Activated B cell treated with CpG ODN at 0.5 μM for 24 hours (primary cell): ENCODE measurements at regions of chr5 and their contacts with region 1.

Region 1: GRCh38 chr5:159100025-159100781 is 487 bp upstream of the EBF1 start:
- DNase-seq: peak; percentile 92
- ATAC-seq: peak; percentile 64
- H3K4me3 Mint-ChIP-seq: peak overlapping the region; percentile 99
- H3K27ac Mint-ChIP-seq: peak overlapping the region; percentile 95
- H3K4me1 Mint-ChIP-seq: peaks cover 69% of the 10 kb centered on the region
- H3K27me3 Mint-ChIP-seq: no peaks in the 10 kb centered on the region
- CTCF ChIP-seq: no peak

Region 2: GRCh38 chr5:158751961-158752655 is 348.1 kb before region 1 on chr5:
- CTCF ChIA-PET with region 1: no interaction called
- POLR2A ChIA-PET with region 1: interaction called, 12 read pairs
- intact Hi-C with region 1: loop called (anchors 2 kb)
- DNase-seq: no peak
- ATAC-seq: peak; percentile 83
- H3K4me3 Mint-ChIP-seq: peak overlapping the region; percentile 71
- H3K27ac Mint-ChIP-seq: peak overlapping the region; percentile 84
- H3K4me1 Mint-ChIP-seq: peaks cover 92% of the 10 kb centered on the region
- H3K27me3 Mint-ChIP-seq: no peaks in the 10 kb centered on the region
- CTCF ChIP-seq: no peak

Region 3: GRCh38 chr5:158875272-158875679 is 224.9 kb before region 1 on chr5:
- CTCF ChIA-PET with region 1: interaction called, 19 read pairs
- POLR2A ChIA-PET with region 1: interaction called, 63 read pairs
- intact Hi-C with region 1: loop called (anchors 1 kb)
- DNase-seq: no peak
- ATAC-seq: peak; percentile 36
- H3K4me3 Mint-ChIP-seq: peak overlapping the region; percentile 72
- H3K27ac Mint-ChIP-seq: peak overlapping the region; percentile 93
- H3K4me1 Mint-ChIP-seq: peaks cover 93% of the 10 kb centered on the region
- H3K27me3 Mint-ChIP-seq: no peaks in the 10 kb centered on the region
- CTCF ChIP-seq: no peak

Region 4: DNA sequence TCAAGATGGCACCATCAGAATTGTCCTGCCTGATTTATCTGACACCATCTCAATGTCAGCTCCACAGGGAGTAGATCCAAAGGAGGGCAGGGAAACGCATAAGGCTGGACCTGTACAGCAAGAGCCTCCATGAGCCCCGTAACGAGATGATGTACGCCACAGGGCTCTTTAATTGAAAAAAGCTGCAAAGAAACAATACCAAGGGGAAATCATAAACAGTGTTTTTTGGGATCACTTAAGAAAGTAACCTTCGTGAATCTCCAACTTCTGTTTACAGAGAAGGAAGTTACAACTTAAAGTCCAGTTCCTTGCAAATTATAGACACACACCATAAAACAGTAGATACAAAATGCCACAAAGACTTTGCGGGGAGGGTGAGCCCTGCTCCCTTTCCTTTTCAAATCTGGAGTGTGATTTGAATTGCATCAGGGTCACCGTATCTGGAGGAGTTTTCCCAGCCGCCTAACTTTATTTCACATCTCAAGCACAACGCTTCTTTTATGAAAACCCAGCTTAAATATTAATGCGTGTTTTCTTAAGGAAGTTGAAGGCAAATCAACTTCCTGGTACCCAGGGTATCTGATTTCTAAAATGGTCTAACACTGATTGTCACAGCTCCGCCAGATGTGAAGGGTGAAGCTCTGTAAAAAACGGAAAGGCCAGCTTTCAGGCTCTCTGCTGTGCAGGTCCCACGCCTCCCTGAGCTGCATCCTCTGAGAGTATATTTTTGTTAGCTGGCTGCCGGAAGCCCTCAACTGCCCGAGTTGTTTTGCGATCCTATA is 89.4 kb before region 1 on chr5:
- CTCF ChIA-PET with region 1: no interaction called
- POLR2A ChIA-PET with region 1: interaction called, 10 read pairs
- intact Hi-C with region 1: no loop called
- DNase-seq: no peak
- ATAC-seq: peak; percentile 82
- H3K4me3 Mint-ChIP-seq: peak overlapping the region; percentile 78
- H3K27ac Mint-ChIP-seq: peak overlapping the region; percentile 91
- H3K4me1 Mint-ChIP-seq: peaks cover 91% of the 10 kb centered on the region
- H3K27me3 Mint-ChIP-seq: no peaks in the 10 kb centered on the region
- CTCF ChIP-seq: no peak

Region 5: DNA sequence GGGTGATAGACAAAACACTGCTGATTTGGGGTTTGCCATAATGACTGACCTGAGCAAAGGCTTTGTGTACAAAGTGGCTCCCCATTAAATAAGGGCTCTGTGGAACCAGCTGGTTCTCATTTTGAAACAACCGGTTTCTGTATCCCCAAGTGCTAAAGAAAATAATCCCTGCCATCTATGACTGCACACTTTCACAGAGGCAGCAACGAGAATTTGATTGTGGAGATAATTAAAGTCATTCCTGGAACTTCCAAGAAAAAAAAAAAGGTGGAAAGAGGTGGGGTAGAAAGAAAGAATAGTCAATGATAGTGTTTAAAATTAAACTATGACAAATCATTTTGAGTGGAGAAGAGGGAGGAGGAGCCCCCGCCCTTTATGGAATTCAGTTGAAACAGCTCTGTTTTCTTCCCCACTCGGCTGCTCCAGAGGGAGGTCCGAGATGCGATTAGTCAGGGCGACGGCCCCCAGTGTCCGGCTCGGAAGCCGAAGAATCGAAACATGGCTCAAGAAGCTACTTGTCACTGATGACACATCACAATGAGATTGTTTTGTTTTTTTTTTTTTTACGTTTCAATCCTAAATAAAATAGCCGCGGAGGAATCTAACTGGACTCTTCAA is 38.9 kb before region 1 on chr5:
- CTCF ChIA-PET with region 1: no interaction called
- POLR2A ChIA-PET with region 1: interaction called, 136 read pairs
- intact Hi-C with region 1: no loop called
- DNase-seq: no peak
- ATAC-seq: no peak
- H3K4me3 Mint-ChIP-seq: no peak overlapping the region
- H3K27ac Mint-ChIP-seq: no peak overlapping the region
- H3K4me1 Mint-ChIP-seq: peaks cover 69% of the 10 kb centered on the region
- H3K27me3 Mint-ChIP-seq: no peaks in the 10 kb centered on the region
- CTCF ChIP-seq: no peak

Region 6: DNA sequence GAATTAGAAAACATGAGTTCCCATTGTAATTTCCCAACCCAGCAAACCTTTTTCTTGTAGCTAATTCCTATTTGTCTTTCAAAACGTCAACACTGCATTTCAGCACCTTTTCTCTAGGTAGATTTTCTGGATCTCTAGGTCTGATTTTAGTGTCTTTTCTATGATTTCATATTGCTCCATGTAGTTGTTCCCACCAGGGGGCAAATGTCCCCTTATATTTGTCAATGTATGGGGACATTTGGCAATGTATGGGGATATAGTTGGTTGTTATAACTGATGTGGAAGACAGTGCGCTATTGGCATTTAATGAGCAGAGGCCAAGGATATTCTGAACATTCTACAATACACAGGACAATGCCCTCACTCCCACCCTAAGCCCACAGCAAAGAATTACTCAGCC is 542.2 kb after region 1 on chr5:
- CTCF ChIA-PET with region 1: no interaction called
- POLR2A ChIA-PET with region 1: no interaction called
- intact Hi-C with region 1: no loop called
- DNase-seq: no peak
- ATAC-seq: no peak
- H3K4me3 Mint-ChIP-seq: no peak overlapping the region
- H3K27ac Mint-ChIP-seq: no peak overlapping the region
- H3K4me1 Mint-ChIP-seq: no peaks in the 10 kb centered on the region
- H3K27me3 Mint-ChIP-seq: peaks cover 15% of the 10 kb centered on the region
- CTCF ChIP-seq: no peak

Region 7: DNA sequence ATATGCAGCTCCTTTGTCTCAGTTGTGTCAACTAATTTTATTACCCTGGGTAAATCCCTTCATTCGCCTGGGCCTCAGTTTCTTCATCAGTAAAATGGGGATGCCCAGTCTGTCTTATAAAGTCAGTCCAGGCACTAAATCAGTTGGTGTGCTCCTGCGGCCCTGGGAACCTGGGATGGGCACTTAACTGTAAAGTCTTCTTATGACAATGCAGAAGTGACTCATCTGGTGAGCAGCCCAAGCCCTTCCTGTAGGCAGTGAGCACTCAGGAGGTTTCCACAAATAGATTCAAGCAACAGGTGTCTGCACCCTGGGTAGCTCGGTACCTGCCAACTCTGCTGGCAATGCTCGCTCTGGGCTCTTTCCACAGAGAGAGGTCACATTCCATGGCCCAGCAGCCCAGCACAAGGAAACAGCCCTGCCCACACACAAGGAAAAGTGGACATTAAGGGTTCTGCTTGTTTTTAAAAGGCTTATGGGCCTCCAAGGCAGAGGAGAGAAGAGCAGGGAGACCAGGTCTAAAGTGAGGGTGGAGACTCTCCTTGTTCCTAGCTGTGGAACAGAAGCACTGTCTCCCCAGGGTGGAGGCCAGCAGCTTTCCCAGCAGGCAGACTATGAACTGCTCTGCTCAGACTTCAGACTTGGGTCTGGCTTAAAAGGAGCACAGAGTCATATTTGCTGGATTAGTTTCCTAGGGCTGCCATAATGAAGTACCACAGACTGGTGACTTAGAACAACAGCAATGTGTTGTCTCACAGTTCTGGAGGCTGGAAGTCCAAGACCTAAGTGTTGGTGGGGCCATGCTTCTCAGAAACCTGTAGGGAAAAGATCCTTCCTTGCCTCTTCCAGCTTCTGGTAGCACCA is 726.4 kb after region 1 on chr5:
- CTCF ChIA-PET with region 1: no interaction called
- POLR2A ChIA-PET with region 1: no interaction called
- intact Hi-C with region 1: no loop called
- DNase-seq: no peak
- ATAC-seq: peak; percentile 64
- H3K4me3 Mint-ChIP-seq: no peak overlapping the region
- H3K27ac Mint-ChIP-seq: no peak overlapping the region
- H3K4me1 Mint-ChIP-seq: peaks cover 15% of the 10 kb centered on the region
- H3K27me3 Mint-ChIP-seq: peaks cover 2% of the 10 kb centered on the region
- CTCF ChIP-seq: no peak